ENCODE measurements at regions of chr3 and their contacts with region 1.

Region 1: DNA sequence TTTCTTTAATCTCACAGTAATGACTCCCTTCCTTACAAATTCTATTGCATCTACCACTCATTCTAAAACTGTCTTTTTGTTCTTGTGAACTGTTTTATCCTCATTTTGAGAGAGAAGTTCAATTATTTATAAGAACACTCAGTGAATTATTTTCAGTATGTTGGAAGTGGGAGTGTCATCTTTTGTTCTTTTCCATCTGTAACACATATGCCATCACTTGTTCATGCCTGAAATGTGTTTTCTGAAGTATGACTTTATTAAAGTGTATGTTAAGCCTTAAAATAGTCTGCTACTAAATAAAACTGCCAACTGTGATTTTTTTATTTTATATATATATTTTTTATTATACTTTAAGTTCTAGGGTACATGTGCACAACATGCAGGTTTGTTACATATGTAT is 623.0 kb upstream of the CBLB start:
- DNase-seq: no peak
- H3K4me3 ChIP-seq: no peak overlapping the region
- CTCF ChIP-seq: no peak

Region 2: GRCh38 chr3:106452096-106452495 is 39.7 kb before region 1 on chr3:
- in situ Hi-C with region 1: no loop called
- DNase-seq: no peak
- H3K4me3 ChIP-seq: no peak overlapping the region
- CTCF ChIP-seq: no peak

Region 3: DNA sequence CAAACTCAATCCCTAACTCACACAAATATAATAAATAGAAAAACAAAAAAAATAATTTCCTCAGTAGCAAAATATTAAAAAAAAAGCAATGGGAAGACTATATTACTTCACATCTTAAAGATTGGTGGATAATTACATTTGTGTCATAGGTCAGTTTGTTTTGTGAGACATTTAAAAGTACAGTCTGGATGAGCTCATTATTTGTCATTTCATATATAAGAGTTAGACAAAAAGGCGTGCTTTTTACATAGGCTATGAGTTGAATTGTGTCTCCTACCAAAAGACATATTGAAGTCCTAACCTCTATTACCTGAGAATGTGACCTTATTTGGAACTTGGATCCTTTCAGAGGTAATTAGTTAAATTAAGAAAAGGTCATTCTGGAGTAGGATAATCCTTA is 87.1 kb after region 1 on chr3:
- in situ Hi-C with region 1: no loop called
- DNase-seq: no peak
- H3K4me3 ChIP-seq: no peak overlapping the region
- CTCF ChIP-seq: no peak

Region 4: GRCh38 chr3:107153981-107154380 is 662.2 kb after region 1 on chr3:
- in situ Hi-C with region 1: loop called (anchors 10 kb)
- DNase-seq: no peak
- H3K4me3 ChIP-seq: no peak overlapping the region
- CTCF ChIP-seq: no peak

Measured in astrocyte of the cerebellum (primary cell).